Mammary epithelial cell (primary cell): ENCODE measurements at regions of chr15 and their contacts with region 1.

Region 1: GRCh38 chr15:39782441-39783138 is at the start of gene FSIP1:
- DNase-seq: peak; percentile 96
- H3K4me3 ChIP-seq: peak within 1 kb of the TSS; percentile 76 to 93 (median 93)
- H3K27ac ChIP-seq: peak within 1 kb of the TSS; percentile 74
- H3K4me1 ChIP-seq: peaks cover 21% of the 10 kb centered on the region
- H3K27me3 ChIP-seq: no peaks in the 10 kb centered on the region
- CTCF ChIP-seq: no peak
- total RNA-seq, gene FSIP1: 3.6 to 3.8 TPM

Region 2: GRCh38 chr15:39860200-39860599 is 77.6 kb after region 1 on chr15:
- CTCF ChIA-PET with region 1: interaction called, 9 read pairs
- dilution Hi-C with region 1: loop called (anchors 5 kb)
- in situ Hi-C with region 1: no loop called
- intact Hi-C with region 1: no loop called
- DNase-seq: no peak
- H3K4me3 ChIP-seq: no peak overlapping the region
- H3K27ac ChIP-seq: no peak overlapping the region
- H3K4me1 ChIP-seq: no peaks in the 10 kb centered on the region
- H3K27me3 ChIP-seq: no peaks in the 10 kb centered on the region
- CTCF ChIP-seq: no peak

Region 3: GRCh38 chr15:39961051-39961450 is 178.5 kb after region 1 on chr15:
- CTCF ChIA-PET with region 1: no interaction called
- dilution Hi-C with region 1: no loop called
- in situ Hi-C with region 1: loop called in 1 of 2 experiments (anchors 25 kb)
- intact Hi-C with region 1: no loop called
- DNase-seq: no peak
- H3K4me3 ChIP-seq: no peak overlapping the region
- H3K27ac ChIP-seq: no peak overlapping the region
- H3K4me1 ChIP-seq: no peaks in the 10 kb centered on the region
- H3K27me3 ChIP-seq: no peaks in the 10 kb centered on the region
- CTCF ChIP-seq: no peak

Region 4: DNA sequence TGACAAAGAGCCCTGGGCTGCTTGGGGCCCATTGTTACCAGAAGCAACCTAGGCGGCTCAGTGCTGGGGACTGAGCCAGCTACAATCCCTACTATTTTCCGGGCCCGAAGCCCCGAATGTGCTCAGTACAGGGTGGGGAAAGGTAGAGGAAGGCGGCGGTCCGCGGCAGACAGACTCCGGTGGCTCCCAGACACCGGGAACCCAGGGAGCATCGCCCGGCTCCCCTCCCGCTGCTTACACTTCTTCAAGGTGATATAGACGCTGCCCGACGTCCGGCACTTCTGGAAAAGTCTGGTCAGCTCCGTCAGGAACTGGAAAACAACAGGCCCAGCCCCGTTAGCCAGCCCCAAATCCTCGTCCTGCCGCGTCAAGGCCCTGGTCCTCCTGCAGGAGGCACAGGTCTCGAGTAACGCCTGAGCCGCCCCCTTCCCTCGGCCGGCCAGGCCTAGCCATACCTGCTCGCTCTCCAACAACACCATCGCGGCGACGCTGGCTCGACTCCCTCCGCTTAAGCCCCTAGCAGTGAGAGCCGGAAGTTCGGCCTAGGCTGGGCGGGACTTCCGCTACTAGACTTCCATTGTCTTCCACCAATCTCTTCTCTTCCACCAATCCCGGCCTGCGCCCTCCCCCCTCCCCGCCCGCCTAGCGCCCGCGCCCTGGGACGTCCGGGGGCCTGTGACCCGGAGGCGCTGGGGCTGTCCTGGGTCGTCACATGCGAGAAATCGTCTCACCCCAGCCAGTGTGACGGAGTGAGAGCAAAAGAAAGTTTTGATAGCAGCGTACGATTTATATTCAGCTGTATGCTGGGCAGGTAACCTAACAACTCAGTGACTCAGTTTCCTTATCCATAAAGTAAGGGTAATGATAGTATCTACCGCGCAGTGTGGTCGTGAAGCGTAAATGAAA is 256.3 kb after region 1 on chr15 and contains the start of gene SRP14:
- CTCF ChIA-PET with region 1: no interaction called
- dilution Hi-C with region 1: no loop called
- in situ Hi-C with region 1: no loop called
- intact Hi-C with region 1: loop called (anchors 5 kb)
- DNase-seq: peak; percentile 89
- H3K4me3 ChIP-seq: peak within 1 kb of the TSS; percentile 65 to 76 (median 73)
- H3K27ac ChIP-seq: peak within 1 kb of the TSS; percentile 72
- H3K4me1 ChIP-seq: peaks cover 7% of the 10 kb centered on the region
- H3K27me3 ChIP-seq: no peaks in the 10 kb centered on the region
- CTCF ChIP-seq: peak in 1 of 2 donors; percentile 16
- total RNA-seq, gene SRP14: 85.7 to 148 TPM

Region 5: DNA sequence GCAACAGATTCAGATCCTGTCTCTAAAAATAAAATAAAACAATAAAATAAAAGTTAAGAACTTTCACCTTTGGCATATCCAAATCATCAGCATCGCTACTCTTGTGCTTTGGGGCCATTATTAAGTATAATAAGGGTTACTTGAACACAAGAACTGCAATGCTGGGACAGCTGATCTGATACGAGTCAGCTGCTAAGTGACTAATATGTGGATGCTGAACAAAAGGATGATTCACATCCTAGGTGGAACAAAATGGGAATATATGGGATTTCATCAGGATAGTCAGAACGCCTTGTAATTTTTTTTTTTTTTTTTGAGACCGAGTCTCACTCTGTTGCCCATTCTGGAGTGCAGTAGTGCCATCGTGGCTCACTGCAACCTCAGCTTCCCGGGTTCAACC is 408.0 kb after region 1 on chr15:
- CTCF ChIA-PET with region 1: no interaction called
- dilution Hi-C with region 1: loop called (anchors 25 kb)
- in situ Hi-C with region 1: no loop called
- intact Hi-C with region 1: no loop called
- DNase-seq: peak; percentile 67
- H3K4me3 ChIP-seq: no peak overlapping the region
- H3K27ac ChIP-seq: peak overlapping the region; percentile 29
- H3K4me1 ChIP-seq: peaks cover 9% of the 10 kb centered on the region
- H3K27me3 ChIP-seq: no peaks in the 10 kb centered on the region
- CTCF ChIP-seq: no peak